ENCODE measurements at regions of chr16 and their contacts with region 1.

Region 1: GRCh38 chr16:82995924-82996441 is 369.2 kb downstream of the CDH13 start:
- DNase-seq: peak; percentile 88
- ATAC-seq: peak; percentile 100
- H3K4me3 ChIP-seq: no peak overlapping the region
- H3K27ac ChIP-seq: peak overlapping the region; percentile 82
- H3K4me1 ChIP-seq: peaks cover 2% of the 10 kb centered on the region; the same call in 1 of the 2 replicates
- H3K27me3 ChIP-seq: no peaks in the 10 kb centered on the region
- CTCF ChIP-seq: no peak
- POLR2A ChIP-seq: no peak
- RAD21 ChIP-seq: no peak

Region 2: DNA sequence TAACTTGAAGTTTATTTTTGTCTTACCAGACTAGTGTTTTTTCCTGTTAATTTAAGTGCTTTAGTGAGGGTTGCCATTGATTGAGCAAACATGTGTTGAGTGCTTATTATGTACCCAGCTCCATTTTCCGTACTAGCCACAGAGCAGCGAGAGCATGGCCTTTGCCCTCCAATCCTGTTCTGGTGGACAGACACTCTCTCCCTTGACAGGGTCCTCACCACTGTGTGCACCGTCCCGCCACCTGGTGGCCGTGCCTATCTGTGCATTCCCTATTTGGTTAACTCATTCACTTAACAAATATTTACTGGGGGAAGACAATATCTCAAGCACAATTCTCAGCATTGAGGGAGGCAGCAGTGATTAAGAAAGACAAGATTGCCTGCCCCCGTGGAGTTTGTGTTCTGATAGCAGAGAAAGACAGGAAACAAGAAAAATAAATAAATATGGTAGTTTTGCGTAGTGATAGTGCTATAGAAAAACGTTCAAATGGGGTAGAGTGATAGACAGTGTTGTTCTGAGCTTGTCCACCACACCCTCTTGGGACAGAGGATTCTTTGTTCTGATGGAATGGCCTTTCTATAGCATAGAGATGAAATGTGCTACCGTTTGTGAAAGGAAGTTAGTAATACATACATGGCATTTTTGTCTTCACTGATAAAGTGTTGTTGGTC is 356.2 kb before region 1 on chr16:
- CTCF ChIA-PET with region 1: no interaction called
- POLR2A ChIA-PET with region 1: no interaction called
- dilution Hi-C with region 1: no loop called
- in situ Hi-C with region 1: no loop called
- intact Hi-C with region 1: loop called (anchors 10 kb)
- DNase-seq: peak; percentile 58
- ATAC-seq: peak; percentile 74
- H3K4me3 ChIP-seq: no peak overlapping the region
- H3K27ac ChIP-seq: no peak overlapping the region
- H3K4me1 ChIP-seq: peaks cover 17% of the 10 kb centered on the region
- H3K27me3 ChIP-seq: no peaks in the 10 kb centered on the region
- CTCF ChIP-seq: peak; percentile 74
- POLR2A ChIP-seq: no peak
- RAD21 ChIP-seq: peak; percentile 62

Region 3: DNA sequence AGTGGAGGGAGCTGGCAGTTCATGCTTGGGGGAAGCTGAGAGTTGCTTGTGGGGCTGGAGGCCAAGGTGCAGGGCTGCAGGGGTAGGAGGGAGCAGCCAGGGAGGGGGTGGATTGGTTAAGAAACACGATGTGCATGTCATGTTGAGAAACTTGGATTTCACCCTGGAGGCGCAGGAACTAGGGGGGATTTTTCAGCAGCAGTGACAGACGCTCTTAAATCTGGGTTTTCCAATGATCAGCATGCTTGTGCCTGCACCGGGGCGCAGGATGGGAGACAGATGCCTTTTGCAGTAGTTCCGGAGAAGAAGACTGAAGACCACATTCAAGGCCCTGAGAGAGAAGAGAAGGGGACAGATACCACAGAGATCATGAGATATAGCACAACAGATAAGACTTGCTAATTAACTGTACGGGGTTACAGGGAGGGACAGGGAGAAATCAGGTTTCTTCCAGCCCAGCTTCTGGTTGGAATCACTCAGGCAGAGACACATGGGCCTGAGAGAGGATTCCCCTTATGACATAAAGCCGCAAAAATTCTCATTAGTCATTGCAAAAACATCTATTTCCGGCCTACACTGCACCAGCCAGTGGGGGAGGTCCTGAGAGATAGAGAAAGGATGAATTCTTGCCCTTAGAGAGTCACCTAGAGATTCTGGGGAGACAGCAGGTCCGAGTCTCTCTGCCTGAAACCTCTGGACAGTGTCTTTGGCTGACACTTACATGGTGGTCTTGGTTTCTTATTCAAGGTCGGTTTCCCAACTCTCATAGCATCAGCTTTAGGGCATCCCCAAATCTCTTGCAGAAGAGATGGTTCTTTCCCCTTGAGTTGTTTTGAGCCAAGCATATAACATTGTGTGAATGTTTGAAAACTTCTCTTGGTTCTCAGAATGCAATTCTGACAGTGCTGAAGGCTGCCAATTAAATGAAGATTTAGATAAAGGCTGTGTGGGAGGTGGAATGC is 342.2 kb before region 1 on chr16:
- CTCF ChIA-PET with region 1: no interaction called
- POLR2A ChIA-PET with region 1: no interaction called
- dilution Hi-C with region 1: no loop called
- in situ Hi-C with region 1: no loop called
- intact Hi-C with region 1: loop called (anchors 5 kb)
- DNase-seq: peak; percentile 95
- ATAC-seq: peak; percentile 77
- H3K4me3 ChIP-seq: no peak overlapping the region
- H3K27ac ChIP-seq: peak overlapping the region; percentile 85
- H3K4me1 ChIP-seq: peaks cover 33% of the 10 kb centered on the region
- H3K27me3 ChIP-seq: no peaks in the 10 kb centered on the region
- CTCF ChIP-seq: no peak
- POLR2A ChIP-seq: peak; percentile 70
- RAD21 ChIP-seq: peak; percentile 22

Region 4: GRCh38 chr16:82684251-82684650 is 311.7 kb before region 1 on chr16:
- CTCF ChIA-PET with region 1: no interaction called
- POLR2A ChIA-PET with region 1: no interaction called
- dilution Hi-C with region 1: no loop called
- in situ Hi-C with region 1: no loop called
- intact Hi-C with region 1: no loop called
- DNase-seq: peak; percentile 25
- ATAC-seq: no peak
- H3K4me3 ChIP-seq: no peak overlapping the region
- H3K27ac ChIP-seq: no peak overlapping the region
- H3K4me1 ChIP-seq: no peaks in the 10 kb centered on the region
- H3K27me3 ChIP-seq: no peaks in the 10 kb centered on the region
- CTCF ChIP-seq: no peak
- POLR2A ChIP-seq: no peak
- RAD21 ChIP-seq: no peak

Measured in IMR-90 (cell line).